ENCODE measurements at regions of chr6 and their contacts with region 1.

Region 1: DNA sequence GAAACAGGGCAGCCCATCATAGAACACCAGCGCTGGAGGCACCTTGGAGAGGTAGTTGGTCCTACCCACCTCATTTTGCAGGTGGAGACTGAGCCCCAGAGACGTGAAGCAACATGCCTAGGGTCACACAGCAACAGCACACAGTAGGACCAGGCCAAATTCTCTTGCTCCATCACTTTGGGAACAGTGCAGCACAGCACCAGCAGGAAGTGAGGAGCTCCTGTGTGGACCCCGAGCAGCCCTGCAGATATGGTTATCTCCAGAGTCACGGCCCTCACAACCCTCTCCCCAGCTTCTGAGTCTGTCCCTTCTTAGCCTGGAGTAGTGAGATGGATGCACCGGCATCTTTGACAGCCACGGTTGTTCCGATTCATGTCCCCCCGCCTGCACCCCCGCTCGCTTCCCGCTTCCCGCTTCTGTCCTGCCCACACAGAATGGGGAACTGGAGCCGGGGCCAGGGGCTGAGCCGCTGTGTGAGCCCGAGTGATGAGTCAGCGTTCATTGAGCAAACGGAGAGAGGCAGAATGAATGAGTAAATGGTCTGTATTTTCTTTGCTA is 72.6 kb upstream of the DUSP22 start:
- DNase-seq: peak; percentile 17
- H3K4me3 Mint-ChIP-seq: no peak overlapping the region
- H3K27ac Mint-ChIP-seq: no peak overlapping the region
- H3K4me1 Mint-ChIP-seq: peaks cover 9% of the 10 kb centered on the region
- H3K27me3 Mint-ChIP-seq: peaks cover 29% of the 10 kb centered on the region
- CTCF ChIP-seq: no peak

Region 2: DNA sequence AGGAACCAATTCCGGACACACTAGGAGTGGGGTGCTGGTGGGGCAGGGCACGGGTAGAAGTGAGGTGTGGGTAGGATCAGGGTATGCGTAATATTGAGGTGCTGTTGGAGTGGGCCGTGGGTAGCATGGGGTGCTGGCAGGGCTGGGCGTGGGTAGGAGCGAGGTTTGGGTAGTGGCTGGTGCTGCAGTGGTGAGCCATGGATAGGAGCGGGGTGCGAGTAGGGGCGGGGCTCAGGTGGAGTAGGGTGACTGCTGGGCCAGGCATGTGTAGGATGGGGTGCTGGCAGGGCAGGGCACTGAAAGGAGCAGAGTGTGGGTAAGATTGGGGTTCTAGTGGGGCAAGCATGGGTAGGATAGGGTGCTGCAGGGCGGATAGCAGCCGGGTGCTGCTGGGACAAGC is 41.6 kb before region 1 on chr6:
- CTCF ChIA-PET with region 1: no interaction called
- intact Hi-C with region 1: no loop called
- DNase-seq: no peak
- H3K4me3 Mint-ChIP-seq: no peak overlapping the region
- H3K27ac Mint-ChIP-seq: no peak overlapping the region
- H3K4me1 Mint-ChIP-seq: no peaks in the 10 kb centered on the region
- H3K27me3 Mint-ChIP-seq: peaks cover 10% of the 10 kb centered on the region
- CTCF ChIP-seq: no peak

Region 3: DNA sequence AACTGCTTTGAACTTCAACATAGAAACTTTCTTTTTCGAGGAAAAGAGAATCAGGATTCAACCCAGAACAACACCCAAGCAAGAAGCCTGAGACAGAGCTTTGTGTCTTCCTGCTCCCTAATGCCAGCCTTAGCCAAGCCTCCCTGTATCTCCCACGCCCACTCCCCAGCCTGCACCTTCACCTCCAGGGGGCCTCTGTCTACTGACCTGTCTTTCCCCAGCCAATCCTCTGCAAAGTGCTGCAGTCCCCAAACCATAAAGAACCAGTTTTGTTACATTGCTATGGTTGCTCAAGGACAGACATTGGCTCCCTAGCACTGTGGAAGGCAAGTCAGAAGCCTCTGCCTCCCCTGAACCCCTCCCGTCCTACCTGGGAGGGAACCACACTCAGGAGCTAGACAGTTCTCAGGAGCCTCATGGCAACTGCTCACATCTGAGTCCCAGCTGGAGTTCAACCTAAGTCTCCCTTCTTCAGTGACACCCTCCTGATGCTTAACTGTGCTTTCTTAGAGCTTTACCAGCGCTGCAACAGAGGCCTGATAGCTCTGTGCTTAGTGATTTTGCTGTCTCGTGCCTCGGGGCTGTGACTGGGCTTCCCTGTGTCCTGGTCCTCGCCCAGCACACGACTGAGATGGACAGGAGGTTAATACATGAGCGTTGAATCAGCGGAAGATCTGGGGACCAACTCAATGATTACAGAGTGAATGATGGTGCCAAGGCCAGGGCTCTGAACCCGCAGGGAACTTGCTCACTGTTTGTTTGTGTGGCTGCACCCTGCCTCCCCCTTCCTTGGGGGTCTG is 28.9 kb before region 1 on chr6:
- CTCF ChIA-PET with region 1: no interaction called
- intact Hi-C with region 1: loop called (anchors 1 kb)
- DNase-seq: no peak
- H3K4me3 Mint-ChIP-seq: no peak overlapping the region
- H3K27ac Mint-ChIP-seq: no peak overlapping the region
- H3K4me1 Mint-ChIP-seq: no peaks in the 10 kb centered on the region
- H3K27me3 Mint-ChIP-seq: peaks cover 22% of the 10 kb centered on the region
- CTCF ChIP-seq: no peak